Mammary epithelial cell (primary cell): ENCODE measurements at regions of chr6 and their contacts with region 1.

Region 1: DNA sequence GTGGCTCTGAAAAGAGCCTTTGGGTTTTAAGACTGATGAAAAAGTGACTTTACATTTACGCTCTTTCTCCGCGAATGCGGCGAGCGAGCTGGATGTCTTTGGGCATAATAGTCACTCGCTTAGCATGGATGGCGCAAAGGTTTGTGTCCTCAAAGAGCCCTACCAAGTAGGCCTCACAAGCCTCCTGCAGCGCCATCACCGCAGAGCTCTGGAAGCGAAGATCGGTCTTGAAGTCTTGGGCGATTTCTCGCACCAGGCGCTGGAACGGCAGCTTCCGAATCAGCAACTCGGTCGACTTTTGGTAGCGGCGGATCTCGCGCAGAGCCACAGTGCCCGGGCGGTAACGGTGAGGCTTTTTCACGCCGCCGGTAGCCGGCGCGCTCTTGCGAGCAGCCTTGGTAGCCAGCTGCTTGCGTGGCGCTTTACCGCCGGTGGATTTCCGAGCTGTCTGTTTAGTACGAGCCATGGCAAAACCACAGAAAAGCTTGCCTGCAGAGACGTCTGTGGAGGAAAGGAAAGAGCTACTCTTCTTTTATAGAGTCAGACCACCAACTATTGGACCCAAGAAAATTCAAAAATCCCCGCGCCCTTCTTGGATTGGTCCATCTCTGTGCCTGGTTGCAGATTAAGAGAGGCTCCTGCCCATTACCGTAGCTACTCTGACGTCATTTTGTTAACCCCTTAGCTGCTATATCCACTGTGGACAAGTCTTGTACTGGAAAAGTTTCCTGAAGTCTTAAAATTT is 55.5 kb upstream of the HFE start:
- DNase-seq: peak; percentile 96
- H3K4me3 ChIP-seq: peak overlapping the region; percentile 53 to 62 (median 61)
- H3K27ac ChIP-seq: peak overlapping the region; percentile 85
- H3K4me1 ChIP-seq: peaks cover 26% of the 10 kb centered on the region
- H3K27me3 ChIP-seq: no peaks in the 10 kb centered on the region
- CTCF ChIP-seq: peak; percentile 5 to 23

Region 2: GRCh38 chr6:26045065-26045927 is 13.5 kb after region 1 on chr6:
- CTCF ChIA-PET with region 1: no interaction called
- dilution Hi-C with region 1: no loop called
- in situ Hi-C with region 1: no loop called
- intact Hi-C with region 1: loop called (anchors 1 kb)
- DNase-seq: peak; percentile 93
- H3K4me3 ChIP-seq: peak overlapping the region; percentile 37 to 64 (median 44)
- H3K27ac ChIP-seq: peak overlapping the region; percentile 79
- H3K4me1 ChIP-seq: peaks cover 27% of the 10 kb centered on the region
- H3K27me3 ChIP-seq: no peaks in the 10 kb centered on the region
- CTCF ChIP-seq: peak; percentile 22 to 36

Region 3: GRCh38 chr6:26054857-26055669 is 23.3 kb after region 1 on chr6:
- CTCF ChIA-PET with region 1: interaction called, 5 read pairs
- dilution Hi-C with region 1: no loop called
- in situ Hi-C with region 1: no loop called
- intact Hi-C with region 1: loop called (anchors 1 kb)
- DNase-seq: peak; percentile 92
- H3K4me3 ChIP-seq: peak overlapping the region; percentile 61 to 82 (median 62)
- H3K27ac ChIP-seq: peak overlapping the region; percentile 91
- H3K4me1 ChIP-seq: peaks cover 9% of the 10 kb centered on the region
- H3K27me3 ChIP-seq: no peaks in the 10 kb centered on the region
- CTCF ChIP-seq: peak in 1 of 2 donors; percentile 19

Region 4: GRCh38 chr6:26097268-26097875 is 65.6 kb after region 1 on chr6:
- CTCF ChIA-PET with region 1: no interaction called
- dilution Hi-C with region 1: loop called (anchors 5 kb)
- in situ Hi-C with region 1: no loop called
- intact Hi-C with region 1: no loop called
- DNase-seq: peak; percentile 34
- H3K4me3 ChIP-seq: no peak overlapping the region
- H3K27ac ChIP-seq: no peak overlapping the region
- H3K4me1 ChIP-seq: no peaks in the 10 kb centered on the region
- H3K27me3 ChIP-seq: no peaks in the 10 kb centered on the region
- CTCF ChIP-seq: peak; percentile 58 to 72